Activated CD4-positive, alpha-beta memory T cell treated with anti-CD3 and anti-CD28 coated beads for 36 hours (primary cell): ENCODE measurements at regions of chr14 and their contacts with region 1.

Region 1: GRCh38 chr14:63867933-63868921 is 15.4 kb downstream of the SYNE2 start:
- DNase-seq: peak; percentile 24
- H3K4me3 Mint-ChIP-seq: peak overlapping the region; percentile 48
- H3K27ac Mint-ChIP-seq: peak overlapping the region; percentile 49
- H3K4me1 Mint-ChIP-seq: peaks cover 59% of the 10 kb centered on the region
- H3K27me3 Mint-ChIP-seq: no peaks in the 10 kb centered on the region

Region 2: DNA sequence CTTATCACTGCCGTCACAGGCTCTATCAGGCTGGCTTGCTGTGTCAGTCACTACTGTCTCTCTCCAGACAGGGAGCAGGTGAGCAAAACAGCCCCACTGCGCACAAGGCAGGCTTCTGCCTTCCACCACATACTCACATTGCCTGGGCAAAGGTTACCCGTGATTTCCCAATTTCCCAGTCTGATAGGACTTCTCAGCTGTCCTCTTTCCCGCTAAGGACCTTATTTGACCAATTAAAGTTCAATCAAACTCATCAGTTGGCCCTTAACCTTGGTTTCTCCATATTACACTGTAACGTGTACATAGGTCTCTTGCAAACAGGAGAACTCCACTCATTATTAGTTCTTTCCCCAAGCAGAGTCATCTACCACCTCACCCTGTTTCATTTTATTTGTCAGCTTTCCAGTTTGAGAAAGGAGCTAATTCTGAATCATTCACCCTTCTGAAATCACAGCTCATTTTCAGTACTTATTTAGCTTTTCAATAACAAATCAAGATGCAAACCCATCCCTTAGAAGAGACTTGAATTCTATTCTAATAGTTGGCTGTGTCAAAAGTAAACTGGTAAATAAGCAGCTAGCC is 255.1 kb after region 1 on chr14:
- CTCF ChIA-PET with region 1: no interaction called
- POLR2A ChIA-PET with region 1: no interaction called
- intact Hi-C with region 1: loop called (anchors 1 kb)
- DNase-seq: no peak
- H3K4me3 Mint-ChIP-seq: no peak overlapping the region
- H3K27ac Mint-ChIP-seq: peak overlapping the region; percentile 64
- H3K4me1 Mint-ChIP-seq: peaks cover 16% of the 10 kb centered on the region
- H3K27me3 Mint-ChIP-seq: no peaks in the 10 kb centered on the region